WTC11 (cell line): ENCODE measurements at regions of chr16 and their contacts with region 1.

Region 1: GRCh38 chr16:84952335-84953189 is 58.8 kb downstream of the ZDHHC7 start:
- DNase-seq: peak; percentile 84
- ATAC-seq: peak; percentile 94
- H3K4me3 Mint-ChIP-seq: no peak overlapping the region
- H3K27ac Mint-ChIP-seq: no peak overlapping the region
- H3K4me1 Mint-ChIP-seq: no peaks in the 10 kb centered on the region
- H3K27me3 Mint-ChIP-seq: no peaks in the 10 kb centered on the region
- CTCF ChIP-seq: peak; percentile 84

Region 2: GRCh38 chr16:84754353-84754856 is 198.2 kb before region 1 on chr16:
- CTCF ChIA-PET with region 1: interaction called, 46 read pairs
- POLR2A ChIA-PET with region 1: no interaction called
- DNase-seq: peak; percentile 65
- ATAC-seq: peak; percentile 88
- H3K4me3 Mint-ChIP-seq: no peak overlapping the region
- H3K27ac Mint-ChIP-seq: 0 out of 2 replicates have a peak overlapping the region, but pooled peaks have one; percentile 48
- H3K4me1 Mint-ChIP-seq: peaks cover 47% of the 10 kb centered on the region
- H3K27me3 Mint-ChIP-seq: no peaks in the 10 kb centered on the region
- CTCF ChIP-seq: peak; percentile 63

Region 3: DNA sequence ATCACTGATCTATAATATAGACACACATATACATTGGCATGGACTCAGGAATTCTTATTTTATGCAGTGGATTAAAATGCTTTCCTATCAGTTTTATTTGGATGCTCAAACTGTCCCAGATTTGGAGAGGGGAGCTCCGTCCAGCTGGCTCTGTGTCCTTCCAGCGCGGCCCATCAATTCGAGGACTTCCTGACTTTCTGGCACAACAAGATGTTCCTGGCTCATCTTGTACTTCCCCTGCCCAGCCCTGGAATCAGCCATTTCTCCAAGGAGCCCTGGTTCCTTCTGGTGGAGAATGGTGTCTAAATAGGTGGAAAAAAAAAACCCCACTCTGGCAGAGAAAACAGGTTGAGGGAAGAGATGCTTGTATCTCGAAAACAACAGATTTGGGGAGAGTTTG is 38.3 kb before region 1 on chr16:
- CTCF ChIA-PET with region 1: interaction called, 12 read pairs
- POLR2A ChIA-PET with region 1: no interaction called
- DNase-seq: no peak
- ATAC-seq: no peak
- H3K4me3 Mint-ChIP-seq: no peak overlapping the region
- H3K27ac Mint-ChIP-seq: no peak overlapping the region
- H3K4me1 Mint-ChIP-seq: no peaks in the 10 kb centered on the region
- H3K27me3 Mint-ChIP-seq: no peaks in the 10 kb centered on the region
- CTCF ChIP-seq: no peak

Region 4: GRCh38 chr16:84933774-84934631 is 18.6 kb before region 1 on chr16:
- CTCF ChIA-PET with region 1: interaction called, 139 read pairs
- POLR2A ChIA-PET with region 1: no interaction called
- DNase-seq: no peak
- ATAC-seq: no peak
- H3K4me3 Mint-ChIP-seq: no peak overlapping the region
- H3K27ac Mint-ChIP-seq: peak overlapping the region; percentile 49; the same call in 1 of the 2 replicates
- H3K4me1 Mint-ChIP-seq: no peaks in the 10 kb centered on the region
- H3K27me3 Mint-ChIP-seq: no peaks in the 10 kb centered on the region
- CTCF ChIP-seq: no peak

Region 5: GRCh38 chr16:84964386-84965128 is 12.0 kb after region 1 on chr16:
- CTCF ChIA-PET with region 1: interaction called, 29 read pairs
- POLR2A ChIA-PET with region 1: no interaction called
- DNase-seq: no peak
- ATAC-seq: no peak
- H3K4me3 Mint-ChIP-seq: no peak overlapping the region
- H3K27ac Mint-ChIP-seq: no peak overlapping the region
- H3K4me1 Mint-ChIP-seq: peaks cover 8% of the 10 kb centered on the region
- H3K27me3 Mint-ChIP-seq: no peaks in the 10 kb centered on the region
- CTCF ChIP-seq: no peak

Region 6: DNA sequence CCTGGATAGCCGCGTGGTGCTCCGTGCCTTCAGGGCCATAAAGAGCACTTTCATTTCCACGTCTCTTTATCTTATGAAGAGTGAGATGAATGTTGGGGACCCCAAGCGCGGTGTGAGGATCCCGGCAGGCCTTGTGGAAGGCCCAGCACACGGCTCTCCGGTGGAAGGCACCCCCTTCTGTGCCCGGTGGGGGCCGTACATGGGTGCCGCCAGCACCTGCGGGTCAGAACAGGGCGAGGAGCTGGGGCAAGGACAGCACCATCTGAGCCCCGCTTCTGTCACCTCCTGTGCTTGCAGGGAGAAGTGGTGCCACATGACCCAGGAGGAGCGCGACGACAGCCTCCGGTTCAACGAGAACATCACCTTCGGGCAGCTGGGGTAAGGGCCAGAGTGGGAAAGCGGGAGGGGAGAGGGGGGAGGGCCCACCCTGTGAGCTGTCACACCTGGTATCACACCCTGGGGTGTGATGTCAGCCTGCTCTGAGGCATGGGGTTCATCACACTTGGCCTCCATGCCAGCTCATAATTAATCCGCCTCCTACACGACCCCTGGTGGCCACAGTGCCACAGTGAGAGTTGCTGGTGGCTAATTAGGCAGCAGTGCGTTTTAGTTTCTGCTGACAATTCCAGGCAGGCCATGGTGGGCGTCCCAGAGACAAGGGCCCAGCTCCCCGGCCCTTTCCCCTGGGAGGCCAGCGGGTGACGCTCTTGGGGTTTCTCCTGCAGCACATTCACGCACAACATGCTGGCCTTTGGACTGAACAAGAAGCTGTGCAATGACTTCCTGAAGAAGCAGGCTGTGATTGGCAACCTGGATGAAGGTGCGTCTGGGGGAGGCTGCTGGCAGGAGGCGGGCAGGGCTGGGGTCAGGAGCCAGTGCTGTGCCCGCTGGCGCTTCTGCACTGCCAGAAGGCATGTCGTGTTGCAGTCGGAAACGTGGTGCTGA is 134.1 kb after region 1 on chr16:
- CTCF ChIA-PET with region 1: interaction called, 12 read pairs
- POLR2A ChIA-PET with region 1: no interaction called
- DNase-seq: peak; percentile 86
- ATAC-seq: peak; percentile 34
- H3K4me3 Mint-ChIP-seq: no peak overlapping the region
- H3K27ac Mint-ChIP-seq: no peak overlapping the region
- H3K4me1 Mint-ChIP-seq: peaks cover 42% of the 10 kb centered on the region
- H3K27me3 Mint-ChIP-seq: peaks cover 52% of the 10 kb centered on the region
- CTCF ChIP-seq: peak; percentile 85